Heart right ventricle (tissue), 16 donors: ENCODE measurements at regions of chr2 and their contacts with region 1.

Region 1: DNA sequence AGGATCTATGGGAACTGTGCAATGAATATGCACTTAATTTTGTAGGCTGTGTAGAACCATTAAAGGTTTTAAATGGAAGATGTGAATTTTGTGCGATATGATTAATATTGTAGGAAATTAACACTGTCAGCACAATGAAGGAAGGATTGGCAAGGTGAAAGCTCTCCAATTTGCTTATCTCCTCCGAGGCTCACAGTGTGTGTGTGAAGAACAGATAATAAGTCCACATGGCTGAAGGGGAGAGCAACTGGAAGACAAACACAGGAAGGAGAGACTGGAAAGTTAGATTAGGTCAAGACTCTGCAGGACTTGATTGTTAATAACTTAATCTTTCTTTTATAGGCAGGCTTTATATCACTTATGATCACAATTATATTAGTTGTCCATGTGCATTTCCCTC is 269.7 kb upstream of the VRK2 start:
- DNase-seq: no peak
- ATAC-seq: no peak
- H3K4me3 ChIP-seq: no peak overlapping the region
- H3K27ac ChIP-seq: no peak overlapping the region
- H3K4me1 ChIP-seq: no peaks in the 10 kb centered on the region
- H3K27me3 ChIP-seq: no peaks in the 10 kb centered on the region
- CTCF ChIP-seq: no peak

Region 2: DNA sequence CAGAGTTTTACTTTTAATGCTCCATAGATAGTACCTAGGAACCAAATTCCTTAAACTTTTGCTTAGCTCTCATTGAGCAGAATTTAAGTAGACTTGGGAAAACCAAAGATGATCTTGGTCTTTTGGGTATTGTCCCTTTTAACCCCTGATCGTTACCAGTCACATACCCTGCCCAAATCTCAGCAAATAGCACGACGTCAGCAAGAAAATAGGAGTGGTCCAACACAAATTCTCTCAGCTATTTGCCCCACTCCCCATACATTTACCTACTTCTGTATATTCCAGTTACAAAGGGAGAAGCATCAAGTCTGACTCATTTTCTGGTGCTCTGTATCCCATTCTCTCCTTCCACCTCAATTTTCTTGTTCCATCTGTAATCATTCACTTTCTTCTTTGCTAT is 1205.8 kb before region 1 on chr2:
- intact Hi-C with region 1: loop called in 1 of 10 experiments (anchors 5 kb)
- DNase-seq: no peak
- ATAC-seq: no peak
- H3K4me3 ChIP-seq: no peak overlapping the region
- H3K27ac ChIP-seq: no peak overlapping the region
- H3K4me1 ChIP-seq: no peaks in the 10 kb centered on the region
- H3K27me3 ChIP-seq: no peaks in the 10 kb centered on the region
- CTCF ChIP-seq: no peak

Region 3: DNA sequence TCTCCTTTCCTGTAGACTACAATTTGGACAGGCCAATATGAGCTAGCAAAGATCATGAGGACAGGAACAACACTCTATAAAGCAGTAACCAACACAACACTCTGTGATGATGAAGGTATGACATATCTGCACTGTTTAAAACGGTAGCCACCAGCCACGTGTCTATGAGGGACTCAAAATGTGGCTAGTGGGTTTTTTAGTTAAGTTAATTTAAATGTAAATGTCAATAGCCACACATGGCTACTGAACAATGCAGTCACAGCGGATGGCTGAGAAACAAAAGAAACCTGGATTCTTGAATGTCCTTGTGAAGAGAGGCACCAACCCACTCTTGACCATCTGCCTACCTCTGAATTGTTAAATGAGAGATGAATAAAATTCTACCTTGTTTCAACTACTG is 430.3 kb after region 1 on chr2:
- intact Hi-C with region 1: loop called in 1 of 10 experiments (anchors 5 kb)
- DNase-seq: no peak
- ATAC-seq: no peak
- H3K4me3 ChIP-seq: no peak overlapping the region
- H3K27ac ChIP-seq: no peak overlapping the region
- H3K4me1 ChIP-seq: no peaks in the 10 kb centered on the region
- H3K27me3 ChIP-seq: no peaks in the 10 kb centered on the region
- CTCF ChIP-seq: no peak